ENCODE measurements at regions of chr12 and their contacts with region 1.

Region 1: GRCh38 chr12:66144791-66145754 is 14.5 kb upstream of the LLPH start:
- DNase-seq: no peak
- H3K4me3 Mint-ChIP-seq: no peak overlapping the region
- H3K27ac Mint-ChIP-seq: peak overlapping the region; percentile 75
- H3K4me1 Mint-ChIP-seq: peaks cover 16% of the 10 kb centered on the region
- H3K27me3 Mint-ChIP-seq: no peaks in the 10 kb centered on the region

Region 2: DNA sequence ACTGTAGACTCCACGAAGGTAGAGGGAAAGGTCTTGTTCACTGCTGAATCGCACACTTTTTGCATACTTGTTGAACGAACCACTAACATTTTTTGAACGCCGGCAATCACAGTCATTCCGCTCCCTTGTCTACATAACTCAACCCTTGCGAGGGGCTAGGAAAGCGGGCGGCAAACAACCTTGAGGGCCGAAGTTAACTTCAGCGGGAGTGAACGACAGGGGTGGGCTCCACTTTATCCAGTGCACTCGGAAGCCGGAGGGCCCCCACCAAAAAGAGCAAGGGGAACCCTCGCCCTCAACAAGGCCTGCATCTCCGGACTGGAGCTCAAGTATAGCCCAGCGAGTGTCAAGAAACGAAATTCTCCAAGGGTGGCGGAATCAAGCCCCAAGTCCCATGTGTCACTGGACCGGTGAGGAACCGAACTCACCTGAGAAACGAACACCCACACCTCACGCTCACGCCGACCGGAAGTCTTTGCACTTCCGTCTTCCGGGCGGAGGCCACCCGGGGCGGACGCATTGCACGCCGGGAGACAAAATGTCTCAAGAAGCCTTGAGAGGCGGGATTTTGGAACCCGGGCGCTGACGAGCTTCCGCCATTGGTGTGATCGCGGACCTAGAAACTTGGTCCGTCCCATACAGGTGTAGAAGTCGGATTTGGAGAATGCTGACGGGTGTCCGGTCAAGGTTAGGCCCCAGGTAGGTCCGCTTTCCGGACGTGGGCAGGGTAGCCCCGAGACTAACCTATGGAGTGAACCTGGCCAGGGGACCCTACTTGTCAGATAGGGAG is 14.6 kb before region 1 on chr12 and contains the start of gene LLPH:
- CTCF ChIA-PET with region 1: interaction called, 27 read pairs
- DNase-seq: peak; percentile 94
- H3K4me3 Mint-ChIP-seq: peak within 1 kb of the TSS; percentile 93
- H3K27ac Mint-ChIP-seq: peak within 1 kb of the TSS; percentile 97
- H3K4me1 Mint-ChIP-seq: peaks cover 59% of the 10 kb centered on the region
- H3K27me3 Mint-ChIP-seq: no peaks in the 10 kb centered on the region